AG04449 (cell line): ENCODE measurements at regions of chr22 and their contacts with region 1.

Region 1: GRCh38 chr22:19143967-19144400 is 467 bp downstream of the ESS2 start:
- DNase-seq: no peak
- H3K4me3 ChIP-seq: peak overlapping the region; percentile 97
- CTCF ChIP-seq: no peak

Region 2: DNA sequence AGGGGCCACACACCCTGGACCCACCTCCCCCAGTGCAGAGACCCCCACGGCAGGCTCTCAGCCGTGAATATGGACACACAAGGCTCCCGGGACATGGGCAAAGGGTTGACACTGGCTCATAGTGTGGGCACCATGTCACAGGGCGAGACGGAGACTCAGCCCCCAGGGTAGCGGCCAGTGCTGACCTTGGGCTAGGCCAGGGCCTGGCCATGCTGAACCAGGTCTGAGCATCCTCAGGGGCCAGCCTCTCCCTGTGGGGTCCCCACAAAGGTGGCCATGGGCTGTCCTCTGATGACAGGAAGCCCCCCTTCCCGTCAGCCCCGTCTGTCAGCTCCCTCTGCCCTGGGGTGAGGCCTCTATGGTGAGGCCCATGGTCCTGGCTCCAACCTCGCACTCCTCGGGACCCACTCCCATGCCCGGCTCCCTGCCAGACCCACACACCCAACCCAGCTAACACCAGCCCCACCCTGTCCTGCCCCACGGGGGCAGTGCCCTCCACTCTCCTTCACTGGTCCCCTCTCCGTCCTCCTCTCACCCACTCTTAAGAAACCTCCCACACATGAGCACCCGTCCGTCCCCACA is 188.9 kb before region 1 on chr22:
- CTCF ChIA-PET with region 1: interaction called, 12 read pairs
- POLR2A ChIA-PET with region 1: no interaction called
- DNase-seq: no peak
- H3K4me3 ChIP-seq: no peak overlapping the region
- CTCF ChIP-seq: no peak

Region 3: DNA sequence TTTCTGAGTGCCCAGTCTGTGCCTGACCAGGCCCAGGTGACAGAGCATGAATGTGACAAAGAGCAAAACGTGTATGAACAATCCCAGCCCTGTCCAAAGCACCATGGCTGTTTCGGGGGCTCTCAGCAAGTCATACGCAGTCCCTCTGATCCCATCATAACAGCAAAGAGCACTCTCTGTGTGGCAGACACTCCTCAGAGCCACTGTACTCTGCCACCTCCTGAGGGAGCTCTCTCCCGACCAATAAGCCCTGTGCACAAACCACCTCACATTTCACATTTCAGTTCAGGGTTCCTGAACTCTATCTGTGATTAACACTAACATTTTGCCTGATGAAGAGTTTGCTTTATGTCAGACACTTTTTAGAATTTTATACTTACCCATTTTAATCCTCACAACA is 28.4 kb before region 1 on chr22:
- CTCF ChIA-PET with region 1: interaction called, 12 read pairs
- POLR2A ChIA-PET with region 1: no interaction called
- DNase-seq: no peak
- H3K4me3 ChIP-seq: no peak overlapping the region
- CTCF ChIP-seq: peak; percentile 34

Region 4: GRCh38 chr22:19122143-19122751 is 21.7 kb before region 1 on chr22 and contains the start of gene DGCR2:
- CTCF ChIA-PET with region 1: interaction called, 9 read pairs
- POLR2A ChIA-PET with region 1: interaction called, 12 read pairs
- DNase-seq: peak; percentile 65
- H3K4me3 ChIP-seq: peak within 1 kb of the TSS; percentile 90
- CTCF ChIP-seq: no peak

Region 5: DNA sequence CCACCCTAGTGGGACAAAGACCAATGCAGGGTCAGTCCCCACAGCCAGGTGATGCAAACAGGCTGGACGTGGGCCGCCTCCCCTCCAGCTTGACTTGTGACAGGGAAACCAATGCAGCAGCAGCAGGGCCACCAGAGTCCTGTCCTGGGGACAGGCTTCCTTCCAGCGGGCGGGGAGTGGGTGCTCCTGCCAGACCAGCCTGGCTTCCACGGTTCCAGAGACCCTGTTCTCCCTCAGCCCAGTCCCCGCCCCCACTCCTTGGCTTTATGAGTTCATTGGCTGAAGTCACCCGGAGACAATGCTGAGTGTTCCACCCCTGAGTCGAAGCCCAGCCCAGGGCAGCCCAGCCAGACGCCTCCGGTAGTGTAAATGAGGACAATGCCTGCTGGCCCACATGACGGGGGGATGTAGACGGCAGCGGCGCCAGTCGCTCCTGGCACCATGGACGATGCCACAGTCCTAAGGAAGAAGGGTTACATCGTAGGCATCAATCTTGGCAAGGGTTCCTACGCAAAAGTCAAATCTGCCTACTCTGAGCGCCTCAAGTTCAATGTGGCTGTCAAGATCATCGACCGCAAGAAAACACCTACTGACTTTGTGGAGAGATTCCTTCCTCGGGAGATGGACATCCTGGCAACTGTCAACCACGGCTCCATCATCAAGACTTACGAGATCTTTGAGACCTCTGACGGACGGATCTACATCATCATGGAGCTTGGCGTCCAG is 12.9 kb before region 1 on chr22 and contains the start of gene TSSK2:
- CTCF ChIA-PET with region 1: interaction called, 23 read pairs
- POLR2A ChIA-PET with region 1: interaction called, 4 read pairs
- DNase-seq: no peak
- H3K4me3 ChIP-seq: no peak within 1 kb of the TSS
- CTCF ChIP-seq: no peak

Region 6: GRCh38 chr22:19168211-19168890 is 24.4 kb after region 1 on chr22:
- CTCF ChIA-PET with region 1: interaction called, 10 read pairs
- POLR2A ChIA-PET with region 1: no interaction called
- DNase-seq: no peak
- H3K4me3 ChIP-seq: no peak overlapping the region
- CTCF ChIP-seq: no peak

Region 7: GRCh38 chr22:19407649-19408606 is 263.9 kb after region 1 on chr22:
- CTCF ChIA-PET with region 1: no interaction called
- POLR2A ChIA-PET with region 1: no interaction called
- DNase-seq: no peak
- H3K4me3 ChIP-seq: no peak overlapping the region
- CTCF ChIP-seq: no peak